CD14-positive monocyte (primary cell): ENCODE measurements at regions of chr13 and their contacts with region 1.

Region 1: GRCh38 chr13:114035583-114036531 is 62.0 kb upstream of the C13orf46 start:
- DNase-seq: peak; percentile 39 to 79 (median 56)
- H3K4me3 ChIP-seq: peak overlapping the region in 1 of 3 experiments; percentile 9
- H3K4me3 Mint-ChIP-seq: peak overlapping the region in 1 of 2 donors; percentile 57
- H3K27ac ChIP-seq: peak overlapping the region in 1 of 2 donors; percentile 26
- H3K27ac Mint-ChIP-seq: peak overlapping the region; percentile 49 to 84 (median 76)
- H3K4me1 ChIP-seq: peaks cover 22 to 28% of the 10 kb centered on the region in 2 donors
- H3K4me1 Mint-ChIP-seq: peaks cover 28% of the 10 kb centered on the region
- H3K27me3 ChIP-seq: no peaks in the 10 kb centered on the region
- H3K27me3 Mint-ChIP-seq: peaks cover 0 to 1% (median 0%) of the 10 kb centered on the region in 3 donors
- CTCF ChIP-seq: no peak

Region 2: DNA sequence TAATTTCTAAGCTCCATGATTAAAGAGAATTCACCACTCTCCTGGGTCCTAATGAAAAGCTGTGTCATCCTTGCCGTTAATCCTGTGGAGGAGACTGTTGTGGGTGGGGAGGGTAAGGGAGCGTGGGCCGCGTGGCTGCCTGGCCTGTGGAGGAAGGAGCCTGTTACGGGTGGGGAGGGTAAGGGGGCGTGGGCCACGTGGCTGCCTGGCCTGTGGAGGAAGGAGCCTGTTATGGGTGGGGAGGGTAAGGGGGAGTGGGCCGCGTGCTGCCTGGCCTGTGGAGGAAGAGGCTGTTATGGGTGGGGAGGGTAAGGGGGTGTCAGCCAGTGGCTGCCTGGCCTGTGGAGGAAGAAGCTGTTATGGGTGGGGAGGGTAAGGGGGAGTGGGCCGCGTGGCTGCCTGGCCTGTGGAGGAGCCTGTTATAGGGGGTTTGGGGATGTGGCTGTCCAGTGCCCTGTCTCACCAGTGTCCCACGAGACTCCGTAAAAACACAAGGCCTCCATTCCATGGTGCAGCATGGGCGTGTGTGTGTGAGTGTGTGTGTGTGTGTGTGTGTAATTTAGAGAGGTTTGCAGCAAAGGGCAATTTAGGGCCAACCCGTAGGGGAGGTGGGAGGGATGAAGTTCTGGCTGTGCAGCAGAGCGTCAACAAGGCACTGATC is 529.7 kb before region 1 on chr13:
- intact Hi-C with region 1: no loop called
- DNase-seq: no peak
- H3K4me3 ChIP-seq: no peak overlapping the region
- H3K4me3 Mint-ChIP-seq: no peak overlapping the region
- H3K27ac ChIP-seq: peak overlapping the region; percentile 12 to 24
- H3K27ac Mint-ChIP-seq: peak overlapping the region in 4 of 7 donors; percentile 24 to 81 (median 60)
- H3K4me1 ChIP-seq: peaks cover 35 to 36% of the 10 kb centered on the region in 2 donors
- H3K4me1 Mint-ChIP-seq: peaks cover 43% of the 10 kb centered on the region
- H3K27me3 ChIP-seq: no peaks in the 10 kb centered on the region
- H3K27me3 Mint-ChIP-seq: peaks cover 0 to 1% (median 0%) of the 10 kb centered on the region in 3 donors
- CTCF ChIP-seq: no peak

Region 3: GRCh38 chr13:114099918-114100445 is 64.1 kb after region 1 on chr13:
- intact Hi-C with region 1: loop called in 1 of 2 experiments (anchors 5 kb)
- DNase-seq: no peak
- H3K4me3 ChIP-seq: no peak overlapping the region
- H3K4me3 Mint-ChIP-seq: no peak overlapping the region
- H3K27ac ChIP-seq: no peak overlapping the region
- H3K27ac Mint-ChIP-seq: peak overlapping the region in 3 of 7 donors; percentile 40 to 69 (median 45)
- H3K4me1 ChIP-seq: peaks cover 0 to 21% of the 10 kb centered on the region in 2 donors
- H3K4me1 Mint-ChIP-seq: peaks cover 41% of the 10 kb centered on the region
- H3K27me3 ChIP-seq: no peaks in the 10 kb centered on the region
- H3K27me3 Mint-ChIP-seq: no peaks in the 10 kb centered on the region
- CTCF ChIP-seq: no peak

Region 4: DNA sequence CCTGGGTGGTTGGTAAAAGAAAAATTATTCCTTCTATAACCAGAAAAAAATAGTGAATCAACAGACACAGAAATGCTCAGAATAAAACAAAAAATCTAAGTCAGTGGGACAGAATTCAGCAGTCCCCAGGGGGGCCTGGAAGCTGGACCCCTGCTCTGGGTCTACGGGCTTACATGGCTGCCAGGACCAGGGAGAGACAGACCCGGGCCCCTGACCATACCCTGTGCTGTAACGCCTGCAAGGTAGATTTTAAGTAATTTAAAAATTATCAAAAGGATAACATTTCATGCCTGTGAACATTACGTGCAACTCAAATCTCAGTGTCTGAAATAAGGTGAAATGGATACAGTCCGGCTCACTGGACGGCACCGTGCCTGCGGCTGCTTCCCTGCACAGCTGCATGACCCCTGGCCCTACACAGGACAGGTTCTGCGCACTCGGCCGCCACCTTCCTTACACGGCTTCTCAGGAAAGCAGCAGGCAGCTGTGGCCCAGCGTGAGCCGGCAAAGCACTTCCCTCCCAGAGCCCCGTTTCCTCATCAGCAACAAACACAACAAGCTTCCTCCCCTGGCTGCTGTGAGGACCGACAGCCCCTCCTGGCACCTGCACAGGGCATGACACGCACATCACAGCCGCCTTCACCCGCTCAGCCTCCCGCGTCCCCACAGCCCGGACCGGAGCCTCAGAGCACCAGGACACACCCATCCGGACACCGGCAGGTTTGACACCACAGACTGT is 74.4 kb after region 1 on chr13:
- intact Hi-C with region 1: no loop called
- DNase-seq: peak; percentile 87 to 90 (median 89)
- H3K4me3 ChIP-seq: peak overlapping the region in 1 of 3 experiments; percentile 42
- H3K4me3 Mint-ChIP-seq: peak overlapping the region; percentile 34 to 84
- H3K27ac ChIP-seq: peak overlapping the region; percentile 1 to 64
- H3K27ac Mint-ChIP-seq: peak overlapping the region in 5 of 7 donors; percentile 58 to 87 (median 73)
- H3K4me1 ChIP-seq: peaks cover 39% of the 10 kb centered on the region in 2 donors
- H3K4me1 Mint-ChIP-seq: peaks cover 42% of the 10 kb centered on the region
- H3K27me3 ChIP-seq: no peaks in the 10 kb centered on the region
- H3K27me3 Mint-ChIP-seq: peaks cover 0 to 4% (median 3%) of the 10 kb centered on the region in 3 donors
- CTCF ChIP-seq: peak; percentile 74